A673 (cell line): ENCODE measurements at regions of chr2 and their contacts with region 1.

Region 1: DNA sequence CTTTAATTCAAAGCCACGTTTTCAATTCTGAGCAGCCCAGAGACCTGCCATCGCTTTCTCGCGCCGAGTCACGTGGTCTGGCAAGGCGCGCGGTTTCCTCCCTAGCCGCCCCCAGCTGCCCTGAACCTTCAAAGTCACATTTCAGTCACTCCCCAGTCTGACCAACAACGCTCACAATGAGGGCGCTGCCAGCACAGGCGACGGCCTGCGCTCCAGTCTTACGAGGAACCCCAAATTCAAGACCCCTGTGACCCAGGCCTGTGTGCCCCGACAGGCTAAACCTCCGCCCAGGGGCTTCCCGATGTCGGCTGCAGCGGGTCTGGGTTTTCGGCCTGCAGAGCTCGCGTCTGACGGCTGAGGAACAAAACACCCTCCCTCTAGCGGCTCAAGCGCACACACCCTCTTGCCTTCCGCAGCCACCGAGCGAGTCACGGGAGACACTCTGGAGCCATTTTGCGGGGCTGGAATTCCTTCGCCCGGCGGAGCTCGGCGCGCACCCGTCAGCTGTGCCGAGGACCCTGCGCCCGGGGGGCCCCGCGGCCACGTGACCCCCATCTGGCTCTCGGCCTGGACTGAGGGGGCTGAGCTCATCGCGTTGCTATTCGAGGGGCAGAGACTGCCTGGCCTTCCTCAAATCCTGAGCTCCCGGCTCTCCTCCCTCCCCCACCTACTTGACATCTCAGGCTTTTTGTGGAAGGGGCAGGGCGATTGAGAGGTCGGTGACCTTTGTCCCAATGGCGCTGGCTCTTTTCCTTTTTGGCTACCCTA is 69.9 kb upstream of the ITGB6 start:
- DNase-seq: peak; percentile 87
- H3K4me3 ChIP-seq: peak overlapping the region; percentile 37
- H3K27ac ChIP-seq: peak overlapping the region; percentile 35
- H3K4me1 ChIP-seq: peaks cover 3% of the 10 kb centered on the region
- H3K27me3 ChIP-seq: no peaks in the 10 kb centered on the region
- CTCF ChIP-seq: peak; percentile 64

Region 2: DNA sequence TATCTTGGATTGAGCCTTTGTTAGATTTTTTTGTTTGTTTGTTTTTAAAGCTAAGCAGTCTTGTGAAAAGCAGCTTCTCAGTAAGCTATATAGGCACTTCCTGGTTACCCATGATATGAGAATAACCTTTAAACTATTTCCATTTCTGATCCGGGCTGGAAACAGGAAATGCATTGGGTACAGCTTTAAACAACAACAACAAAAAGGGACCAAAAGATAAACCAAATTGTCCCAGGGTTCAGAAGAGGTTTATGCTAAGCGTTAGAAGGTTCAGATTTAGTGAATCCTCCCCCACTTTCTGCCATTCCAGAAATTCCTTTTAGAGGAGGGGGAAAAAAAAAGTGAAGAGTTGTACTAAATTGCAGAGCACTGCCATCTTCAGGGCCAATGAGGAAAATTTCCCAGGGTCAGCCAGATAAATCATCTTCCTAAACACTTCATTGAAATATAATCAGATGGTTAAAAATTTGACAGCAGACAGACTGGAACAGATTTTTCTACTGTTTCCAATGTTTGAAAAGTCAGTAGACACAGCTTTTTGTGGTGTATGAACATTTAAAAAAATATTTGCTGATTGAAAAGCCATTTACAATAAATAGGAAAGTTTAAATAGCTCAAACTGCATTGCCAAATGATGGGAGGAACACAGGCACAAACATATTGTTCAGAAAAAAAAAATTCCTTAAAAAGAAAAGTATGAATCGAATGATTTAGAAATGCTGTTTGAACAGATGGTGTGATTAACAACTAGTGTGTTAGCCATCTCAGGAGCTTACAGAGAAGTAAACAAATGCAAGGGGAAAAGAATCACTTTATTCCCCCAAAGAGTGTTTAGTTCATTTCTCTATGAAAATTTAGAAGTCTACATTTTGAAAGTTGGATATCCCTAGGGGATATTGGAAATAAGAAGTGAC is 700.3 kb after region 1 on chr2:
- CTCF ChIA-PET with region 1: no interaction called
- POLR2A ChIA-PET with region 1: no interaction called
- intact Hi-C with region 1: loop called (anchors 10 kb)
- DNase-seq: peak; percentile 84
- H3K4me3 ChIP-seq: no peak overlapping the region
- H3K27ac ChIP-seq: no peak overlapping the region
- H3K4me1 ChIP-seq: peaks cover 3% of the 10 kb centered on the region
- H3K27me3 ChIP-seq: no peaks in the 10 kb centered on the region
- CTCF ChIP-seq: peak; percentile 83